ENCODE measurements at regions of chr17 and their contacts with region 1.

Region 1: DNA sequence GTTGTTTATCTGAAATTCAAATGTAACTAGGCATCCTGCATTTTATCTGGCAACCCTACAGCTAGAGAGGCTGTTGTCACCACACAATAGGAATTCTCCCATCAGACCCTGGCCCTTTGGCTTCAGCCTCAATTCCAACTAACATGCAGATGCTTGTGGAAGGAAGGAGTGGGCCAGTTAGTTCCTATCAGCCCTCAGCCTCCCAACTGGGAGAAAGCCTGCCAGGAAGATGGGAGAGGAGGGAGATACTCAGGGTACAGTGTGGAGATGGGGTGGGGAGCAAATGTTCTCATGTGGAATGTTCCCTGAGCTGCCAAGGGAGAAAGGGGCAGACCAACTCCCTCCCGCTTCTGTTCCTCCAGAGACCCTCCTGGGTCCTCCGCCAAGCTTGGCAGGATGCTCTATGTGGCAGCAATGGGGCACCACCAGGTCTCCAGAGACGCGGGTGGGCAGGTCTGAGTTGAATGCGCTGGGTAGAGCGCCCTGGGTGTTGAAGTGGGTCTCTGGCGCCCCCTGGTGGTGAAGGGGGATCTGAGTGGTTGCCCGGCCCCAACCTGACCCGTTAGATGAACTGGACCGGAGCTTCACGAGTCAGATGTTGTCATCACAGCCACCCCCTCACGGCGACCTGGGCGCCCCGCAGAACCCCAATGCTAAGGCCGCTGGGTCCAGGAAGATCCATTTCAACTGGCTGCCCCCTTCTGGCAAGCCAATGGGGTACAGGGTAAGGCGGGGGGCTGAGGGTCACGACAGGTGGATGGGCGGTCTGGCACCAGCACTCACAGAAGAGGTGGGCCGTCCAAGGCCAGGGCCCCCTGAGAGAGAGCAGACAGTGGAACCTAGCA is 15.2 kb downstream of the GALK1 start:
- DNase-seq: peak; percentile 71 to 93 (median 86)
- ATAC-seq: peak; percentile 67 to 73
- H3K4me3 Mint-ChIP-seq: peak overlapping the region in 1 of 10 donors; percentile 11
- H3K27ac Mint-ChIP-seq: peak overlapping the region in 3 of 10 donors; percentile 27 to 83 (median 51)
- H3K4me1 Mint-ChIP-seq: peaks cover 10 to 18% (median 15%) of the 10 kb centered on the region in 4 donors
- H3K27me3 Mint-ChIP-seq: peaks cover 0 to 3% (median 0%) of the 10 kb centered on the region in 5 donors

Region 2: DNA sequence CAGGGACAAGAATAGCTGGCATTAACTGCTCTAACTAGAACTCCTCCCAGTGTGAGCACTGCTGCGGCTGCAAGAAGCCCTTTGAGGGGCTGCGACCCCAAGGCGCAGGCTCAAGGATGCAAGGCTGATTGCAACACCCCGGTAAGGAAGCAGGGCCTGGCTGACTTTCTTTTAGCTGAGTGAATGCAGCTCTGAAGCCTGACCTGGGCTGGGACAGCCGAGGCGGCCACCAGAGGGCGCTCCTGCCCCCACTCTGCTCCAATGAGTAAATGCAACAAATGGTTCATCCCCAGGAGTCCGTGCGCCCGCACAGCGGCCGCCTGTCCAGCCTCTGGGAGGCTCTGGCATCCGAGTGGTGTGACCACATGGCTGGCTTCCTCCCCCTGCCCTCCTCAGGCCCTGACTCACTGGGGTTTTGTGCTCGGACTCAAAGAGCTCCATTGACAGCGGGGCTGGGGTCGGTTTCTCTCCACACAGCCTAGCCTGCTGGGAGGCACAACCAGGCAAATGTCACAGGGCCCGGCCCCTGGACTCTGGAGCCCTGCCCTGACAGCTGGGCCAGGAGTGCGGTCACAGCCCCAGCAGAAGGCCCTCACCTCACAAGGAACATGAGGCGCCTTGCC is 116.8 kb before region 1 on chr17 and contains the start of gene SMIM5:
- POLR2A ChIA-PET with region 1: interaction called, 11 read pairs
- DNase-seq: peak; percentile 60 to 87 (median 80)
- ATAC-seq: peak; percentile 88 to 90
- H3K4me3 Mint-ChIP-seq: no peak within 1 kb of the TSS
- H3K27ac Mint-ChIP-seq: peak within 1 kb of the TSS in 3 of 10 donors; percentile 38 to 86 (median 56)
- H3K4me1 Mint-ChIP-seq: peaks cover 3 to 13% (median 6%) of the 10 kb centered on the region in 4 donors
- H3K27me3 Mint-ChIP-seq: no peaks in the 10 kb centered on the region
- polyA plus RNA-seq, gene SMIM5: 0.06 to 0.13 TPM in 2 of 3 donors, not detected in the other

Region 3: DNA sequence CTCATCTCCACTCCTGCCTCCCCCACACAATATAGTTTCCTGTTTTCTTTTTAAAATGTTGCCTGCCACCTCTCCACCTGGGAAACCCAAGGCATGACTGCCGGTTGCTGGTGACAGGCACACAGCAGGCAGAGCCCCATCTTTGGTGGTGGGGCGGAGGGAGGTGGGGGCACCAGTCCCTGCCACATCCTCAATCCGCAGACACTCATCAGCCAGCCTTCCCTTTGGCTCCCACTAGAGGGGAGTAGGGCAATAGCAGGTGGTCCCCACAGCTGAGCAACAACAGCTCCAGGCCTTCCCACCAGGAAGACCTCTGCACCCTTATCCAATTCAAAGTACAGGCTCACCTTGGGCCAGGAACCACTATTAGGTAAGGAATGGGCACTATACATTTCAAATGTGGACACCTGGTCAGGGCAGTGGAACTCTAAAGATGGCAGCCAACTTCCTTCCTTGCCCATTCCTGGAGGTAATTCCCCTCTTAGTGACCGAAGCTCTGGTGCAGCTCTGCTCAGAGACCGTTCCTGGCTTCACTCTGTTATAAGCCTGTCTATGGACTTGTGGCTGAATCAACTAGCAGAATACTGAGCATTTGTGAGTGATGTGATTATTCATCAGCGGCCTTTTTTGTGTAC is 96.7 kb before region 1 on chr17:
- POLR2A ChIA-PET with region 1: no interaction called
- DNase-seq: peak in 9 of 10 donors; percentile 13 to 71 (median 37)
- ATAC-seq: peak; percentile 87 to 90
- H3K4me3 Mint-ChIP-seq: peak overlapping the region in 1 of 10 donors; percentile 19
- H3K27ac Mint-ChIP-seq: peak overlapping the region in 2 of 10 donors; percentile 46 to 52
- H3K4me1 Mint-ChIP-seq: peaks cover 7 to 13% (median 9%) of the 10 kb centered on the region in 4 donors
- H3K27me3 Mint-ChIP-seq: no peaks in the 10 kb centered on the region

Region 4: GRCh38 chr17:75764711-75765421 is 15.1 kb after region 1 on chr17 and contains the start of gene GALK1:
- POLR2A ChIA-PET with region 1: interaction called, 49 read pairs
- DNase-seq: peak; percentile 50 to 83 (median 68)
- ATAC-seq: peak; percentile 92 to 93
- H3K4me3 Mint-ChIP-seq: peak within 1 kb of the TSS; percentile 68 to 84 (median 75)
- H3K27ac Mint-ChIP-seq: peak within 1 kb of the TSS in 9 of 10 donors; percentile 31 to 84 (median 60)
- H3K4me1 Mint-ChIP-seq: peaks cover 1 to 23% (median 16%) of the 10 kb centered on the region in 4 donors
- H3K27me3 Mint-ChIP-seq: no peaks in the 10 kb centered on the region
- polyA plus RNA-seq, gene GALK1: 9.5 to 14.4 (median 13.9) TPM

Region 5: GRCh38 chr17:75827252-75828115 is 77.7 kb after region 1 on chr17:
- POLR2A ChIA-PET with region 1: interaction called, 12 read pairs
- DNase-seq: peak; percentile 47 to 82 (median 58)
- ATAC-seq: peak; percentile 68 to 70
- H3K4me3 Mint-ChIP-seq: peak overlapping the region; percentile 52 to 79 (median 63)
- H3K27ac Mint-ChIP-seq: peak overlapping the region; percentile 25 to 93 (median 85)
- H3K4me1 Mint-ChIP-seq: peaks cover 6 to 33% (median 20%) of the 10 kb centered on the region in 4 donors
- H3K27me3 Mint-ChIP-seq: no peaks in the 10 kb centered on the region

Measured in naive thymus-derived CD8-positive, alpha-beta T cell (primary cell).